GM12878 (cell line): ENCODE measurements at regions of chr3 and their contacts with region 1.

Region 1: GRCh38 chr3:118269537-118270125 is 765.0 kb downstream of the IGSF11 start:
- DNase-seq: no peak
- ATAC-seq: no peak
- H3K4me3 ChIP-seq: no peak overlapping the region
- H3K27ac ChIP-seq: no peak overlapping the region
- H3K4me1 ChIP-seq: no peaks in the 10 kb centered on the region
- H3K27me3 ChIP-seq: no peaks in the 10 kb centered on the region
- CTCF ChIP-seq: no peak
- EP300 ChIP-seq: no peak
- POLR2A ChIP-seq: no peak
- RAD21 ChIP-seq: no peak

Region 2: GRCh38 chr3:117989982-117990381 is 279.6 kb before region 1 on chr3:
- CTCF ChIA-PET with region 1: no interaction called
- POLR2A ChIA-PET with region 1: no interaction called
- RAD21 ChIA-PET with region 1: no interaction called
- SMC1A ChIA-PET with region 1: no interaction called
- in situ Hi-C with region 1: no loop called
- intact Hi-C with region 1: no loop called
- DNase-seq: no peak
- ATAC-seq: no peak
- H3K4me3 ChIP-seq: no peak overlapping the region
- H3K27ac ChIP-seq: no peak overlapping the region
- H3K4me1 ChIP-seq: no peaks in the 10 kb centered on the region
- H3K27me3 ChIP-seq: no peaks in the 10 kb centered on the region
- CTCF ChIP-seq: no peak
- EP300 ChIP-seq: no peak
- POLR2A ChIP-seq: no peak
- RAD21 ChIP-seq: no peak

Region 3: GRCh38 chr3:118110211-118110610 is 159.4 kb before region 1 on chr3:
- CTCF ChIA-PET with region 1: no interaction called
- POLR2A ChIA-PET with region 1: no interaction called
- RAD21 ChIA-PET with region 1: no interaction called
- SMC1A ChIA-PET with region 1: no interaction called
- in situ Hi-C with region 1: no loop called
- intact Hi-C with region 1: no loop called
- DNase-seq: no peak
- ATAC-seq: no peak
- H3K4me3 ChIP-seq: no peak overlapping the region
- H3K27ac ChIP-seq: no peak overlapping the region
- H3K4me1 ChIP-seq: no peaks in the 10 kb centered on the region
- H3K27me3 ChIP-seq: 0 out of 4 replicates have a peak, but pooled peaks cover 0 to 2% of the 10 kb centered on the region in 2 experiments
- CTCF ChIP-seq: no peak
- EP300 ChIP-seq: no peak
- POLR2A ChIP-seq: no peak
- RAD21 ChIP-seq: no peak

Region 4: GRCh38 chr3:118478706-118479276 is 209.2 kb after region 1 on chr3:
- CTCF ChIA-PET with region 1: no interaction called
- POLR2A ChIA-PET with region 1: no interaction called
- RAD21 ChIA-PET with region 1: no interaction called
- SMC1A ChIA-PET with region 1: no interaction called
- in situ Hi-C with region 1: no loop called
- intact Hi-C with region 1: loop called (anchors 5 kb)
- DNase-seq: no peak
- ATAC-seq: peak; percentile 10
- H3K4me3 ChIP-seq: no peak overlapping the region
- H3K27ac ChIP-seq: no peak overlapping the region; the same call in 1 of the 2 replicates
- H3K4me1 ChIP-seq: peaks cover 7% of the 10 kb centered on the region
- H3K27me3 ChIP-seq: no peaks in the 10 kb centered on the region
- CTCF ChIP-seq: no peak
- EP300 ChIP-seq: no peak
- POLR2A ChIP-seq: no peak
- RAD21 ChIP-seq: no peak